Activated CD4-positive, alpha-beta memory T cell treated with anti-CD3 and anti-CD28 coated beads for 36 hours (primary cell): ENCODE measurements at regions of chr19 and their contacts with region 1.

Region 1: DNA sequence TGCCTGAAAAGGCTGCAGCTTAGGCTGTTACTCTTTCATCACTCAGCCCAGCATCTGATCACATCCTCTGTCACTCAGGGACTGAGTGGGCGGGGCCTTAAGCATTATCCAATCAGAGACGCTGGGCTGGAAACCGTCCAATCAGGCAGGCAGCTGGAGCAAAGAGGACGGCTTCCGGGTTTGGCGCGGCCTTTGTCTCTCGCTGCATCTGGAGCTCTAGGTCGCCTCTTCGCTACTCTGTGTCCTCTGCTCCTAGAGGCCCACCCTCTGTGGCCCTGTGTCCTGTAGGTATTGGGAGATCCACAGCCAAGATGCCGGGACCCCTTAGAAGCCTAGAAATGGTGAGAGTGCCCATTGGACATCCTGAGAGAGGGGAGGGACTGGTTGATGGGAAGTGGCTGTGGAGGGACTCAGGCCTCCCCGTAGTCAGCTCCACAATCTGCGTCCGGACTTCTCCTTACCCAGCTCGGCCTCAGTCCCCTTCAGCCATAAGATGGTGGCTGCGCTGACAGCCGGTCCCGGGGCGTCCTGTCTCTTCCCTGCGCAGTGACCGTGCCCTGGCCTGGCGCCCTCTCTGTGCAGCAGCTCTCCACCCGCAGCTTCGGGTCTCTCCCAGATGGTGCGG is at the start of gene ZNF486:
- DNase-seq: peak; percentile 97
- H3K4me3 Mint-ChIP-seq: peak within 1 kb of the TSS; percentile 98
- H3K27ac Mint-ChIP-seq: peak within 1 kb of the TSS; percentile 92
- H3K4me1 Mint-ChIP-seq: peaks cover 45% of the 10 kb centered on the region
- H3K27me3 Mint-ChIP-seq: no peaks in the 10 kb centered on the region
- total RNA-seq, gene ZNF486: 12.5 to 12.9 TPM

Region 2: DNA sequence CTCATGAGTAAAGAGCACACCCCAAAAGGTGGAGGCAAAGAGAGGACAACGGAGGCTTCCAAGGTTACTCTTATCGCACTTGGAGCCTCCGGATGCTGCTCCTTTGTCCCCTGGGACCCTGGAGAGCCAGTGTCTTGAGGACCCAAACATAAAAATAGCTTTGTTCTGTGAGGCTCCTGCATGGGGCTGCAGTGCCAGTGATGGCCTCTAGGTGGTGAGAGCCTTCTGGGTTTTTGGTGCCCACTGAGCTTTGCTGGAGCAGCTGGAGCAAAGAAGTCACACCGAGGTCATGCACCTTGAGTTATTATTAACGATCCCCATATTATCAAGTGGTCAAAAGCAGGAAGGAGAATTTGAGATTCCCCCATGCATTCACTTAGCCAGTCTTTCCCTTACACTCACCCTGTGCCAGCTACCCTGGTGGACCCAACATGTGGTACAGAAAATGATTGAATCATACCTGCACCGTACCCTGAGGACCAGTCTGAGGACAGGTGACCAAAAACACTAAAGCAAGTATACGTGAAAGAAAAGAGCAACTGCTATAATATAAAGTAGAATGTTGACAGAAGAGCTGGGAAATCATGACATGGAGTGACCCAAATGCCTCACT is 169.4 kb before region 1 on chr19:
- CTCF ChIA-PET with region 1: interaction called, 11 read pairs
- POLR2A ChIA-PET with region 1: no interaction called
- intact Hi-C with region 1: no loop called
- DNase-seq: peak; percentile 66
- H3K4me3 Mint-ChIP-seq: no peak overlapping the region
- H3K27ac Mint-ChIP-seq: no peak overlapping the region
- H3K4me1 Mint-ChIP-seq: no peaks in the 10 kb centered on the region
- H3K27me3 Mint-ChIP-seq: no peaks in the 10 kb centered on the region

Region 3: DNA sequence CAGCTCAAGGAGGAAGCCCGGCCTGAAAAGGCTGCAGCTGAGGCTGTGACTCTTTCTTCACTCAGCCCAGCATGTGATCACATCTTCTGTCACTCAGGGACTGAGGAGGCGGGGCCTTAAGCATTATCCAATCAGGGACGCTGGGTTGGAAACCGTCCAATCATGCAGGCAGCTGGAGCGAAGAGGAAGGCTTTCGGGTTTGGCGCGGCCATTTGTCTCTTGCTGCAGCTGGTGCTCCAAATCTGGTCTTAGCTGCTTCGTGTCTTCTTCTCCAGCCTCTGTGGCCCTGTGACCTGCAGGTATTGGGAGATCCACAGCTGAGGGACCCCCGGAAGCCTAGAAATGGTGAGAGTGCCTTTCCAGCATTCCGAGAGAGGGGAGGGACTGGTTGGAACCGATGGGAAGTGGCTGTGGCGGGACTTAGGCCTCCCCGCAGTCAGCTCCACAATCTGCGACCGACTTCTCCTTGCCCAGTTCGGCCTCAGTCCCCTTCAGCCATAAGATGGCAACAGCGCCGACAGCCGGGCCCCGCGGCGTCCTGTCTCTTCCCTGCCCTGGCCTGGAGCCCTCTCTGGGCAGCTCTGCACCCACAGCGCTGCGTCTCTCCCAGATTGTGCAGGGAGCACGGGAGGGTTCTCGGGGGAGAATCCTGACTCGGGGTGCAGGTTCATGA is 89.2 kb before region 1 on chr19 and contains the start of gene ZNF90:
- CTCF ChIA-PET with region 1: no interaction called
- POLR2A ChIA-PET with region 1: interaction called, 9 read pairs
- intact Hi-C with region 1: loop called (anchors 1 kb)
- DNase-seq: peak; percentile 96
- H3K4me3 Mint-ChIP-seq: peak within 1 kb of the TSS; percentile 93
- H3K27ac Mint-ChIP-seq: peak within 1 kb of the TSS; percentile 61
- H3K4me1 Mint-ChIP-seq: peaks cover 9% of the 10 kb centered on the region
- H3K27me3 Mint-ChIP-seq: no peaks in the 10 kb centered on the region
- total RNA-seq, gene ZNF90: 13.8 to 16.3 TPM

Region 4: DNA sequence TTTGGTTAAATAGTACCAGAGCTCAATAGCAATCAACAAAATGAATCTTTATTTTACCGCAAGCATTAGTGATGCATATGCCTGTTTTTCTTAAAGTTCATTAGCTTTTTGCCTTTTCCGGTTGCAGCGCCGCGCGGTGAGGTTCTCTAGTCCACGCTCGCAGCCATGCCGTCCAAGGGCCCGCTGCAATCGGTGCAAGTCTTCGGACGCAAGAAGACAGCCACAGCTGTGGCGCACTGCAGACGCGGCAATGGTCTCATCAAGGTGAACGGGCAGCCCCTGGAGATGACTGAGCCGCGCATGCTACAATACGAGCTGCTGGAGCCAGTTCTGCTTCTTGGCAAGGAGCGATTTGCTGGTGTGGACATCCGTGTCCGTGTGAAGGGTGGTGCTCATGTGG is 42.3 kb before region 1 on chr19:
- CTCF ChIA-PET with region 1: no interaction called
- POLR2A ChIA-PET with region 1: no interaction called
- intact Hi-C with region 1: no loop called
- DNase-seq: no peak
- H3K4me3 Mint-ChIP-seq: no peak overlapping the region
- H3K27ac Mint-ChIP-seq: no peak overlapping the region
- H3K4me1 Mint-ChIP-seq: no peaks in the 10 kb centered on the region
- H3K27me3 Mint-ChIP-seq: no peaks in the 10 kb centered on the region

Region 5: GRCh38 chr19:21568816-21569493 is 1401.8 kb after region 1 on chr19:
- CTCF ChIA-PET with region 1: no interaction called
- POLR2A ChIA-PET with region 1: no interaction called
- intact Hi-C with region 1: loop called (anchors 5 kb)
- DNase-seq: peak; percentile 92
- H3K4me3 Mint-ChIP-seq: peak overlapping the region; percentile 94
- H3K27ac Mint-ChIP-seq: peak overlapping the region; percentile 91
- H3K4me1 Mint-ChIP-seq: peaks cover 23% of the 10 kb centered on the region
- H3K27me3 Mint-ChIP-seq: no peaks in the 10 kb centered on the region